Activated T-helper 2 cell treated with anti-CD3 and anti-CD28 coated beads, Interferon-gamma antibody, Interleukin-2, Interleukin-4, amounts not matched to agents 10 μg/mL and 5 μg/mL and 100 μg/mL, durations not matched to agents 14 hours and 24 hours and 36 hours (primary cell): ENCODE measurements at regions of chr11 and their contacts with region 1.

Region 1: DNA sequence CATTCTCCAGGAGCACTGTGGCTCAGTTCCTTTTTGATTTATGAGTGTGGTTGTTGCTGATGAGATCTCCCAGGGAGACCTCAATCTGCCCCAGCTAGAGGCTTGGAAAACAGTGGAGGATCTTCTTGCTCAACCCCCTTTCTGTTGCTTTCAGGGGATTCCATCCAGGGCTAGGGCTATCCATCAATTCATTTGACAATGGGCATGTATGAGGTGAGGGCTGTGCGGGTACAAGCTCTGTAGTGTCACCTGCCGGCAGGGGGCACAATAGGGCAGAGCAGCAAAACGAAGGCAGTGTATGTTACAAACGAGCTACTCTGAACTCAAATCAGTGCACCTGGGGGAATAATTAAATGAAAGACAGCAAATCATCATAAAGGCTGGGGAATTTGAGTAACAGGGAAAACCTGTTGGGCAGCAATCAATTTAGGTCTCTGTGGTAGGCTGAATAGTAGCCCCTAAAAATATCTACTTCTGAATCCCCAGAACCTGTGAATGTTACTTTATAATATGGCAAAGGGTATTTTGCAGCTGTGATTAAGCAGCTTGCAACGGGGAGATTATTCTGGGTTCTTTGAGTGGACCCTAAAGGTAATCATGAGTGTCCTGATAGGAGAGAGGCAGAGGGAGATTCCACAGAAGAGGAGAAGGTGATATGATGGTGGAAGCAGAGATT is 170.3 kb upstream of the ZBED5 start:
- DNase-seq: peak; percentile 55
- H3K4me3 Mint-ChIP-seq: no peak overlapping the region
- H3K27ac Mint-ChIP-seq: no peak overlapping the region
- H3K4me1 Mint-ChIP-seq: no peaks in the 10 kb centered on the region
- H3K27me3 Mint-ChIP-seq: peaks cover 30% of the 10 kb centered on the region

Region 2: GRCh38 chr11:11000579-11001283 is 27.4 kb before region 1 on chr11:
- intact Hi-C with region 1: no loop called
- DNase-seq: no peak
- H3K4me3 Mint-ChIP-seq: no peak overlapping the region
- H3K27ac Mint-ChIP-seq: no peak overlapping the region
- H3K4me1 Mint-ChIP-seq: no peaks in the 10 kb centered on the region
- H3K27me3 Mint-ChIP-seq: peaks cover 30% of the 10 kb centered on the region

Region 3: DNA sequence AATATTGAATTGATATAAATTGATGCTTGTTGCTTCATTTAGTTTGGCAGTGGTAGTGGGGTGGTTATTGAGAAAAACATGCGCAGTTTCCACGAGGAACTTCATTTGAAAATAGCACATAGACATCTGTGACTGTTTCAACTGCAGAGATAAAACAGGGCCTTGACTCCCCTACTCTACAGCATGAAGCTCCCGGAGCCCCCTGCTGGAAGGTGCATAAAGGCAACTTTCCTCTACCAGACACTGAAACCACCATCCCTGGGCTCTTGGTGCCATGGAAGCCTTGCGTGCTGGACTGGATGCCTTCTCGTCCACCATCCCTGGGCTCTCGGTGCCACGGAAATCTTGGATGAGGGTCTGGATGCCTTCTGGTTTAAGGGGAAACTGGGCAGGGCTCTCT is 129.0 kb after region 1 on chr11:
- intact Hi-C with region 1: loop called (anchors 2 kb)
- DNase-seq: no peak
- H3K4me3 Mint-ChIP-seq: no peak overlapping the region
- H3K27ac Mint-ChIP-seq: no peak overlapping the region
- H3K4me1 Mint-ChIP-seq: peaks cover 9% of the 10 kb centered on the region
- H3K27me3 Mint-ChIP-seq: no peaks in the 10 kb centered on the region

Region 4: DNA sequence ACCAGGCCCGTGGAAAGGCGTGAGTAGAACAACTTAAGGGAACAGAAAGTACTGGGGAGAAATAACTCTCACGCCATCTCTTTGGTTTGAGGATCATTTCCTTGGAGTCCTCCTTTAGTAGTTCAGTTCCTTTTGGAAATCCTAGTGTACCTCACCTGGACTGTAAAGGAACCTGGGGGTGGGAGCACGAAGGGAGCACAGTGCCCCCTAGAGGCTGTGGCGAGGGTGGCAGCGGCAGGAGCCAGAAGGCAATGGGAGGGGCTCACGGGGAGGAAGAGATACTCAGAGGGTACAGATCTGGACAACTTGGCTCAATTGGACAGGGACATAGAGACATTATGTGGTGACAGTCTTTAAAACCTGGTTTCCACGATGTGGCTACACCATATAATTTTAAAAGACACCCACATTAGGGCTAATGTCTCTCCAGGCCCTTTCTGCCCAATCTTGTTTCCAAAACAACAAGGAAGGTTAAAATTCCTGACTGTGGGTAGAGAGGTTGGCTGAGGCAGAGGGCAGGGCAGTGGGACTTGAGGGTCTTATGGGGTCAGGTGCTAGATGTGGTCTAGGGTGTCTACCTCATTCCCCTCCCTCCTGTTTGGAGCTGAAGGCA is 237.9 kb after region 1 on chr11:
- intact Hi-C with region 1: loop called (anchors 2 kb)
- DNase-seq: peak; percentile 46
- H3K4me3 Mint-ChIP-seq: no peak overlapping the region
- H3K27ac Mint-ChIP-seq: no peak overlapping the region
- H3K4me1 Mint-ChIP-seq: no peaks in the 10 kb centered on the region
- H3K27me3 Mint-ChIP-seq: no peaks in the 10 kb centered on the region

Region 5: GRCh38 chr11:11787305-11788062 is 759.3 kb after region 1 on chr11:
- intact Hi-C with region 1: loop called (anchors 1 kb)
- DNase-seq: peak; percentile 37
- H3K4me3 Mint-ChIP-seq: no peak overlapping the region
- H3K27ac Mint-ChIP-seq: no peak overlapping the region
- H3K4me1 Mint-ChIP-seq: no peaks in the 10 kb centered on the region
- H3K27me3 Mint-ChIP-seq: peaks cover 3% of the 10 kb centered on the region